Activated naive CD4-positive, alpha-beta T cell treated with anti-CD3 and anti-CD28 coated beads for 36 hours (primary cell): ENCODE measurements at regions of chr1 and their contacts with region 1.

Region 1: DNA sequence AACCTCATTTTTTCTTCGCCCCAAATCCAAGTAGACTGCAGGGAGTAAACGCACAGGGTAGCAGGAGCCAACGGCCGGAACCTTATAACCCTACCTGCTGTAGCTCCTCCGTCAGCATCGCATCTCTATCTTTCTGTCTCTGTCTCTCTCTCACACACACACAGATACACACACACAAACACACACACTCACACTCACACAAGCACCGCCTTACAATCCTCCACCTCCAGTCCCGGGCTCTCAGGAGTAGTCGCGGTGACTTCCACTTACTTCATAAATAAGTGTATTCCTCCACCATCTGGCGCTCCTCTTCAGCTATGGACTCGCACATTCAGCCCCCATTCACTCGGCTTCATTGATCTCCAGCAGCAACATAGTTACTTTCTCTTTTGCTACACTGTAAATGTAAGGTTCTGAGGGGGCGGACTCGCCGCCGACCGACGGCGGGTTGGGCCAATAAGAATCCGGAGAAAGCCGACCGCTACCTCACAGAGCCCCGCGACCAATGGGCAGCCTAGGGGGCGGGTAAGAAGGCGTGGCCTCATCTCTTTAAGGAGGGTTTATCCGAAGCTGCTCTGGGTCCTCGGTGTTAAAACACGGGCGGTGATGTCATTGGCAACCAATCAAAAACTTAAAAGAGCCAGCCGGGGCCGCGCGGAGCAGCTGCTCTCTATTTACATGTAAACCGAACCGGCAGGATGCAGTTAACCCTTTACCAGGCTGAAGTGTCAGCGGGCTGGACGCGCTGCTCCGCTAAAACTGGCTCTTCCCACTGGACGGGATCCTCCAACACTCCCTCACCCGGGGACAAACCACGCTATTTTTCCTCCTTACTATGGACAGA is at the start of gene DUSP10:
- DNase-seq: peak; percentile 99
- H3K4me3 Mint-ChIP-seq: no peak within 1 kb of the TSS
- H3K27ac Mint-ChIP-seq: peak within 1 kb of the TSS; percentile 48
- H3K4me1 Mint-ChIP-seq: peaks cover 33% of the 10 kb centered on the region
- H3K27me3 Mint-ChIP-seq: no peaks in the 10 kb centered on the region
- total RNA-seq, gene DUSP10: 9.1 TPM

Region 2: DNA sequence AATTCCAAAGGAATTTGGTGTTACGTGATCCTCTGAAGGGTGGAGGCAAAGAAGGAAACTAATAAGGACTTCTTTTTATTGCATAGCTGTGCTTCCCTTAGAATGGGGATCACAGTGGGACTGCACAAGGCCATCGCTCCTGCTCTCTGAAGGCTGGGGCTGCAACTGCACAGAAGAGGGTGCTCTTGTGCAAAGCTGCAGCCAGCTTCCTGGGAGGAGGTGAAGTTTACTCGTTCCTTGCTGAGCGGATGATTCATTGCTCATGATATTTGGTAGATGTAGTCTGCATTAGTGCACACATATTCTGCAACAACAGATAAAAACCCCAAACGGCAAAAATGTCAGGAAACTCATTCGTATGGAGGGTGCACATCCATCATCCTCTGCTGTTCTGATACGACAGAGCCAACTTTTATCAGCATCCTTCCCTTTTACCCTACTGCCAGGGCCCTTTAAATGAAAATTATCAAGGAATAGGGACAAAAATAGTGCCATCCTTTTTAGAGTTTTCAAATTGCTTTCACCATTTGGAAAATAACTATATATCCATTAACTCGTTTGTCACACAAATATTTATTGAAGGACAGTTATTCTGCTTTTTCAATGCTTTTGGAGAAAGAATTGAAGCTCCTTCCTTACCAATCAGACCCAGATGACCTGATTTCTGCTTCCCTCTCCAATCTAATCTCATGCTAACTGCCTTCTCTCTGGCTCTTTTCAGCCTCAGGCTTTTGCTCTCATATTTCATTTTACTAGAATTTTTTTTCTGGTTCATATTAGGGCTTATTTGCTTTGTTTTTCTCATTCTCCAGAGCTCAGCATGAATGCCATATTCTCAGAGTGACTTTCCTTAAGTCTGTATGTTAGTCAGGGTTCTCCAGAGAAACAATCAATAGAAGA is 263.6 kb before region 1 on chr1:
- CTCF ChIA-PET with region 1: interaction called, 6 read pairs
- intact Hi-C with region 1: loop called (anchors 1 kb)
- DNase-seq: peak; percentile 74
- H3K4me3 Mint-ChIP-seq: no peak overlapping the region
- H3K27ac Mint-ChIP-seq: no peak overlapping the region
- H3K4me1 Mint-ChIP-seq: peaks cover 2% of the 10 kb centered on the region
- H3K27me3 Mint-ChIP-seq: peaks cover 5% of the 10 kb centered on the region

Region 3: GRCh38 chr1:221602866-221603265 is 139.1 kb before region 1 on chr1:
- CTCF ChIA-PET with region 1: no interaction called
- intact Hi-C with region 1: no loop called
- DNase-seq: no peak
- H3K4me3 Mint-ChIP-seq: no peak overlapping the region
- H3K27ac Mint-ChIP-seq: no peak overlapping the region
- H3K4me1 Mint-ChIP-seq: no peaks in the 10 kb centered on the region
- H3K27me3 Mint-ChIP-seq: no peaks in the 10 kb centered on the region

Region 4: GRCh38 chr1:221777431-221778072 is 35.6 kb after region 1 on chr1:
- CTCF ChIA-PET with region 1: interaction called, 4 read pairs
- intact Hi-C with region 1: loop called (anchors 1 kb)
- DNase-seq: peak; percentile 79
- H3K4me3 Mint-ChIP-seq: peak overlapping the region; percentile 49
- H3K27ac Mint-ChIP-seq: peak overlapping the region; percentile 89
- H3K4me1 Mint-ChIP-seq: peaks cover 74% of the 10 kb centered on the region
- H3K27me3 Mint-ChIP-seq: no peaks in the 10 kb centered on the region

Region 5: GRCh38 chr1:221858818-221859611 is 117.1 kb after region 1 on chr1:
- CTCF ChIA-PET with region 1: interaction called, 3 read pairs
- intact Hi-C with region 1: loop called (anchors 1 kb)
- DNase-seq: no peak
- H3K4me3 Mint-ChIP-seq: no peak overlapping the region
- H3K27ac Mint-ChIP-seq: no peak overlapping the region
- H3K4me1 Mint-ChIP-seq: peaks cover 11% of the 10 kb centered on the region
- H3K27me3 Mint-ChIP-seq: no peaks in the 10 kb centered on the region

Region 6: GRCh38 chr1:222171005-222171404 is 429.1 kb after region 1 on chr1:
- CTCF ChIA-PET with region 1: no interaction called
- intact Hi-C with region 1: loop called (anchors 1 kb)
- DNase-seq: no peak
- H3K4me3 Mint-ChIP-seq: no peak overlapping the region
- H3K27ac Mint-ChIP-seq: no peak overlapping the region
- H3K4me1 Mint-ChIP-seq: no peaks in the 10 kb centered on the region
- H3K27me3 Mint-ChIP-seq: no peaks in the 10 kb centered on the region

Region 7: DNA sequence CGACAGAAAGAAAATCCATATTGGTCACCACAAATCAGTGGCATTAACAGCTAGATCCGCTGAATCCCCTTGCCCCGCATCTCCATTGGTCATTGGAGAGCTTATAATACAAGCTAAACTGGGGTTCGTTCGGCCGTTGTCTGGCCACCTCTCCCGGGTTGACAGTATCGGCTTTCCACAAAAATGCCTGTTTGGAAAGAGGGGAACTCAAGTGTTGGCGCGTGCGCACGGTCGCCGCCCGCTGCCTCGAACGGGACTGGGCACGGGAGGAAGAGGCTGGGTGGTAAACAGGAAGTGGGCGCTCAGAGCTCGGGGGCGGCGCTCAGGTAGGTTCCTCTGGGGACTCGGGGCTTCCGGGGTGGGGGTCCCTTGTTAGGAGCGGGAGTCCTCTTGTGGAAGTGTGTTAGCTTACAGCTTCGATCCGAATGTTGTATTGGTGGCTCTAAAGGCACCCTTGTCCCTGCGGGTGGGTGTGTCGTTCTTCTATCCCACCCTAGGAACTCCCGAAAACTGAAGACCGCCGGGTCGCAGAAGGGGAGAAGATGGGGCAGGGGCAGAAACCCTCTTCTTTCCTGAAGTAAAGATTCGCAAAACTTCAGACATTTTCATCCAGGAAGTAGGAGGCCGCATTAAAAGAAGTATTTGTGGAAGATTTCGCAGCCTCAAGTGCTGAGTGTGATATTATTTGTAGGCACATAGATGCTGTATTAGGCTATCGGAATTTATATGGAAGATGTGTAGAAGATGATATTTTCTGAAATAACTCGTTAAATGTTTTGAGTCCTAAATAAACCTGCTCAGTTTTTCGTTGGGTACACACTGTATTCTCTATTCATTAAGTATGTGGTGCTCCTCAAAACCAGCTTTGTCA is 971.4 kb after region 1 on chr1:
- CTCF ChIA-PET with region 1: no interaction called
- intact Hi-C with region 1: loop called (anchors 1 kb)
- DNase-seq: peak; percentile 91
- H3K4me3 Mint-ChIP-seq: peak overlapping the region; percentile 100
- H3K27ac Mint-ChIP-seq: peak overlapping the region; percentile 98
- H3K4me1 Mint-ChIP-seq: peaks cover 37% of the 10 kb centered on the region
- H3K27me3 Mint-ChIP-seq: no peaks in the 10 kb centered on the region